Endothelial cell of umbilical vein (primary cell): ENCODE measurements at regions of chr20 and their contacts with region 1.

Region 1: GRCh38 chr20:63223221-63224207 is 7.6 kb upstream of the YTHDF1 start:
- DNase-seq: peak; percentile 35
- H3K4me3 ChIP-seq: no peak overlapping the region
- H3K27ac ChIP-seq: no peak overlapping the region
- H3K4me1 ChIP-seq: no peaks in the 10 kb centered on the region
- H3K27me3 ChIP-seq: peaks cover 0 to 1% of the 10 kb centered on the region in 2 experiments
- CTCF ChIP-seq: peak; percentile 75 to 81
- POLR2A ChIP-seq: no peak

Region 2: GRCh38 chr20:63167376-63168173 is 55.9 kb before region 1 on chr20:
- CTCF ChIA-PET with region 1: no interaction called
- POLR2A ChIA-PET with region 1: no interaction called
- dilution Hi-C with region 1: no loop called
- intact Hi-C with region 1: no loop called
- DNase-seq: no peak
- H3K4me3 ChIP-seq: no peak overlapping the region
- H3K27ac ChIP-seq: no peak overlapping the region
- H3K4me1 ChIP-seq: no peaks in the 10 kb centered on the region
- H3K27me3 ChIP-seq: no peaks in the 10 kb centered on the region
- CTCF ChIP-seq: no peak
- POLR2A ChIP-seq: no peak

Region 3: DNA sequence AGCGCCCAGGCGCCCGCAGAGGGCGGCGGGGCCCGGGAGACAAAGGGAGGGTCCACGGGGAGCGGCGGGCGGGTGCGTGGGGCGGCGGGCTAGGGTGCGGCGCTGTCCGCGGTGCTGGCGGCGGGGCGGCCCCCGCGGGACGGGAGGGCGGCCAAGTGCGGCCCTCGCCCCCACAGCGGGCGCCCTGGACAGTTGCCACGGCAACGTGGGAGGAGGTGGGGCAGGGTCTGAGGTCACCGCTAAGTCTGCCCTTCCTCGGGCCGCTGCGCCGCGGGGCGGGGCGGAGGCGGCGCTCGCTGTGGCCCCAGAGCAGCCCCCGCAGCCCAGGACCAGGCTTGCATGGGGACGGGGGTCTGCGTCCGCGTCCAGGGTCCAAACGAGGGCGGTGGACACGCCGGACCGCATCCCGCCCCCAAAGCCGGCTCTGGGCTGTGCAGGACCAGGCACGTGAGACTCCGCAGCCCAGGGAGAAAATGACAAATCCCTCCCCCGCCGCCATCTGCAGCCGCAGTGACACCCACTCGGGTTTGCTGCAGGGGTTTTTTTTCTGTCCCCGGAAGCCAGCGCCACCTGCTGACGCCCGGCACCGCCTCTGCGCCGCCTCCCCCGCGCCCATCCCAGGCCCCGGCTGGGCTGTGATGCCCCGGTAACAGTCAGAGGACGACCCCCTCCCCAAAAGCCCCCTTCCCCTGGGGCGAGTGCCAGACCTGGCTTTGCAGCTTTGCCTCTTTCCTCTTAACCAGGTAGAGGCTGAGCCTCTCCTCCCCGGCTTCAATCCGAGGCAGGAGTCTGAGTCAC is 44.4 kb before region 1 on chr20:
- CTCF ChIA-PET with region 1: interaction called, 13 read pairs
- POLR2A ChIA-PET with region 1: no interaction called
- dilution Hi-C with region 1: no loop called
- intact Hi-C with region 1: loop called (anchors 5 kb)
- DNase-seq: no peak
- H3K4me3 ChIP-seq: no peak overlapping the region
- H3K27ac ChIP-seq: no peak overlapping the region
- H3K4me1 ChIP-seq: no peaks in the 10 kb centered on the region
- H3K27me3 ChIP-seq: peaks cover 40 to 55% of the 10 kb centered on the region in 2 experiments
- CTCF ChIP-seq: peak in 1 of 2 donors; percentile 20
- POLR2A ChIP-seq: no peak

Region 4: DNA sequence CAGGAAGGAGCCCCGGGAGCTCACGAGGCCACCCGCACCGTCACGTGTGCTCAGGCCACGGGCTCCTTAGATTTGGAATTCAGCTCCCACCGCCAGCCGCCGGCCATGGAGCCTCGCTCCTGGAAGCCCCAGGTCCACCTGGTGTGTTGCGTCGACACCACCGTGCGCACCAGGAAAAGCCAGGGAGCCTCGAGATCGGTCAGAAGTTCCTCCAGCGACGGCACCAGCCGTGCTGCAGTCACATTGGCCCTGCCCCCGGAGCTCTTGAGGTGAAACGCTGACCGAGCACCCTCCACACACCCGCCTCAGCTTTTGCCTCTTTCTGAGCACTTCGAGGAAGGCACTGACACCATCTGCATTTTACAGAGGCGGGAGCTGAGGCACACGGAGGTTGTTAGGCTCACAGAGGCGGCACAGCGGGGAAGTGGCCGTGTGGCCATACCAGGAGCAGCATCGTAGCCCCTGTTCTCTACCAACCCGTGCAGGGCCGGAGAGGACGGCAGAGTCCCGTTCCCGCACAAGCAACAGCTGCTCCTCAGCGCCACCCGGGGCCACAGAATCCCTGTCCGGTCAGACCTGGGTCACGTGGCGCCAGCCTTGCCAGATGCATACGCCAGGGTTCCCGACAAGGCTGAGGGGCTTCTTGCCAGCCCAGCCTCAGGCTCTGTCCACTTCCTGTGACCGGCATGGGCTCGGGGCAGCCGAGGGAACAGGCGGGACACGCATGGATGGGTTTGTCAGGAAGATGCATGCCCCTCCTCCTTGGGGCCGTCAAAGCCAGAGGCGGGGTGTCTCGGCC is 23.2 kb after region 1 on chr20:
- CTCF ChIA-PET with region 1: interaction called, 116 read pairs
- POLR2A ChIA-PET with region 1: no interaction called
- dilution Hi-C with region 1: no loop called
- intact Hi-C with region 1: no loop called
- DNase-seq: no peak
- H3K4me3 ChIP-seq: no peak overlapping the region
- H3K27ac ChIP-seq: no peak overlapping the region
- H3K4me1 ChIP-seq: no peaks in the 10 kb centered on the region
- H3K27me3 ChIP-seq: no peaks in the 10 kb centered on the region
- CTCF ChIP-seq: no peak
- POLR2A ChIP-seq: no peak

Region 5: DNA sequence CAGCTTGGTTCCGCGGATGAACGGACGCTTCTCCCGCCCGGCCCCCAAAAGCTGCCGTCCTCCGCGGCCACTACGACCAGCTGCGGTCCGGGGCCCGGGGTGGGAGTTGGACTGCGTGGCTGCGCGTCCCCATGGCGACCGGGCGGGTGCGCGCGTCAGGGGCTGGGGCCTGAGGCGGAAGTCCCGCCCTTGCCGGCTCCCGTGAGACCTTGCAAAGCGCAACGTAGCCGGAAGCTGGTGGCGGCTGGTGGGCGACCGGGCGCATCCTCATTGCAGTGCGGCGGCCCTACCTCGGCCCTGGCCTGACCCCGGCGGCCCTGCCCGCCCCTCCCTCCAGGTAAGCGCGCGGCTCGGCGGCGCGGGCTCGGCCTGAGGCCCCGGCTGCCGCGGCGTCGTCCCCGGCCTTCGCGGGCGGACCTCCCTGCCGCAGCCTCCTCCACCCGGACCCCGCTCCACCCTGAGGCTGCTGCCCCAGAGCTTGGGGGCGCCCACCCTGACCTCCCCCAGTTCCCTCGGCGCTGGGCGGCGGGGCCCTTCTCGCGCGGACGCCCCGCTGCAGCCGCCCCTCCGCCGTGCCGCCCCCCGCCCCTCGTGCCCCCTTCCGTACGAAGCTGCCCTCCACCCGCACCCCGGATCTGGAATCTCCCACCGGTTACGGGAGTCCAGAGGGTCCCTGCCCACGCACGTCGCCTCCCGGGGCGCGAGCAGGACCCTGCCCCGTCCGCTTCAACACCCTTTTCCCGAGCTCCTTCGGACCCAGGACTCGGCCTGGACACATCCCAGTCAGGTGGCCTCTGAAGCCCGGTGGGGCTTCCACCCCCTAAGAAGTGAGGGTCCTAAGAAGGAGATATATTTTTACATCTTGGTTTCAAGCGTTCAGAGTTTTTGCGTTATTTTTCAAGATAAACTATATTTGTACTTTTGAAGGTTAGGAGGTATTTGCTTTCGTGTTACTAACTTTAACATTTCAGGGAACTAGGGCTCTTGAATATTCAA is 49.4 kb after region 1 on chr20 and contains the start of gene ARFGAP1:
- CTCF ChIA-PET with region 1: interaction called, 25 read pairs
- POLR2A ChIA-PET with region 1: no interaction called
- dilution Hi-C with region 1: no loop called
- intact Hi-C with region 1: no loop called
- DNase-seq: peak; percentile 86
- H3K4me3 ChIP-seq: peak within 1 kb of the TSS; percentile 82 to 89 (median 87)
- H3K27ac ChIP-seq: peak within 1 kb of the TSS; percentile 64
- H3K4me1 ChIP-seq: peaks cover 6% of the 10 kb centered on the region
- H3K27me3 ChIP-seq: no peaks in the 10 kb centered on the region
- CTCF ChIP-seq: no peak
- POLR2A ChIP-seq: peak; percentile 79
- total RNA-seq, gene ARFGAP1: 111 and 126 TPM in 2 replicates

Region 6: GRCh38 chr20:63290677-63291472 is 67.4 kb after region 1 on chr20:
- CTCF ChIA-PET with region 1: interaction called, 50 read pairs
- POLR2A ChIA-PET with region 1: no interaction called
- dilution Hi-C with region 1: no loop called
- intact Hi-C with region 1: loop called (anchors 5 kb)
- DNase-seq: peak; percentile 32
- H3K4me3 ChIP-seq: no peak overlapping the region
- H3K27ac ChIP-seq: no peak overlapping the region
- H3K4me1 ChIP-seq: no peaks in the 10 kb centered on the region
- H3K27me3 ChIP-seq: peaks cover 3 to 6% of the 10 kb centered on the region in 2 experiments
- CTCF ChIP-seq: peak; percentile 70 to 87
- POLR2A ChIP-seq: no peak

Region 7: GRCh38 chr20:63370618-63371187 is 147.2 kb after region 1 on chr20:
- CTCF ChIA-PET with region 1: no interaction called
- POLR2A ChIA-PET with region 1: no interaction called
- dilution Hi-C with region 1: no loop called
- intact Hi-C with region 1: no loop called
- DNase-seq: no peak
- H3K4me3 ChIP-seq: no peak overlapping the region
- H3K27ac ChIP-seq: no peak overlapping the region
- H3K4me1 ChIP-seq: no peaks in the 10 kb centered on the region
- H3K27me3 ChIP-seq: no peaks in the 10 kb centered on the region
- CTCF ChIP-seq: no peak
- POLR2A ChIP-seq: no peak

Region 8: DNA sequence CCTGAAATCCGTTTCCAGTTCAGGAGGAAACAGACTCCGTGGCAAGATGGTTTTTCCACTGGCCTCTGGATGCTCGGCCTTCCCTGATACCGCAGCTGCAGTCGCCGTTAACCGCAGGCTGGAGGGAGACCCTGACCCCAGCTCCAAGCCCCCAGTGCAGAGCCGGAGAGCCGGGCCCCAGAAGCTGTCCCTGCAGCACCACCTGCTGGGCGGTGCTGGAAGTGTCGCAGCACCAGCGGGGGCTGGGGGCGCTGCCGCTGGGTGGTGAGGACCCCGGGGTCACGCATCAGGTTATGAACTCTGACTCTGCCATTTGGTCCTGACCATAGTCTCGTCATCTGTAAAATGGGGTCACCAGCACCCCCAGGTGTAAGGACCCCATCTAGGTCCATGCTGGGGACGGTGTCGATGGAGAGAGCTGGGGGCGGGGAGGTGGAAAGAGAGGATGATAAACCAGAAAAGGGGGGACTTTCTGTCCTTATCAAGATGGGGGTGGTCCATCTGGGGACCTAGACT is 158.4 kb after region 1 on chr20:
- CTCF ChIA-PET with region 1: interaction called, 94 read pairs
- POLR2A ChIA-PET with region 1: no interaction called
- dilution Hi-C with region 1: no loop called
- intact Hi-C with region 1: no loop called
- DNase-seq: peak; percentile 18
- H3K4me3 ChIP-seq: no peak overlapping the region
- H3K27ac ChIP-seq: no peak overlapping the region
- H3K4me1 ChIP-seq: no peaks in the 10 kb centered on the region
- H3K27me3 ChIP-seq: peaks cover 0 to 3% of the 10 kb centered on the region in 2 experiments
- CTCF ChIP-seq: peak; percentile 94 to 98
- POLR2A ChIP-seq: no peak